CD4-positive, alpha-beta memory T cell (primary cell): ENCODE measurements at regions of chr12 and their contacts with region 1.

Region 1: GRCh38 chr12:109093022-109093918 is at the start of gene ALKBH2:
- DNase-seq: peak; percentile 93 to 98 (median 95)
- H3K4me3 ChIP-seq: peak within 1 kb of the TSS; percentile 62 to 75
- H3K4me3 Mint-ChIP-seq: peak within 1 kb of the TSS; percentile 84 to 91 (median 86)
- H3K27ac ChIP-seq: peak within 1 kb of the TSS; percentile 60
- H3K27ac Mint-ChIP-seq: peak within 1 kb of the TSS; percentile 86 to 97 (median 95)
- H3K4me1 ChIP-seq: peaks cover 27% of the 10 kb centered on the region
- H3K4me1 Mint-ChIP-seq: peaks cover 21 to 56% (median 34%) of the 10 kb centered on the region in 4 donors
- H3K27me3 ChIP-seq: no peaks in the 10 kb centered on the region
- H3K27me3 Mint-ChIP-seq: no peaks in the 10 kb centered on the region
- total RNA-seq, gene ALKBH2: 12.9 to 14.4 TPM

Region 2: GRCh38 chr12:107760809-107761501 is 1332.3 kb before region 1 on chr12 and contains the start of gene PRDM4:
- CTCF ChIA-PET with region 1: no interaction called
- POLR2A ChIA-PET with region 1: no interaction called
- intact Hi-C with region 1: loop called (anchors 2 kb)
- DNase-seq: peak; percentile 87 to 94 (median 93)
- H3K4me3 ChIP-seq: peak within 1 kb of the TSS; percentile 77 to 82
- H3K4me3 Mint-ChIP-seq: peak within 1 kb of the TSS; percentile 89 to 95 (median 92)
- H3K27ac ChIP-seq: peak within 1 kb of the TSS; percentile 64
- H3K27ac Mint-ChIP-seq: peak within 1 kb of the TSS; percentile 90 to 98 (median 94)
- H3K4me1 ChIP-seq: peaks cover 41% of the 10 kb centered on the region
- H3K4me1 Mint-ChIP-seq: peaks cover 17 to 45% (median 26%) of the 10 kb centered on the region in 4 donors
- H3K27me3 ChIP-seq: no peaks in the 10 kb centered on the region
- H3K27me3 Mint-ChIP-seq: no peaks in the 10 kb centered on the region
- total RNA-seq, gene PRDM4: 35.8 to 38.3 TPM

Region 3: GRCh38 chr12:108884116-108885012 is 208.9 kb before region 1 on chr12:
- CTCF ChIA-PET with region 1: interaction called, 57 read pairs
- POLR2A ChIA-PET with region 1: no interaction called
- intact Hi-C with region 1: no loop called
- DNase-seq: peak; percentile 51 to 58 (median 54)
- H3K4me3 ChIP-seq: no peak overlapping the region
- H3K4me3 Mint-ChIP-seq: no peak overlapping the region
- H3K27ac ChIP-seq: no peak overlapping the region
- H3K27ac Mint-ChIP-seq: peak overlapping the region in 1 of 7 donors; percentile 60
- H3K4me1 ChIP-seq: no peaks in the 10 kb centered on the region
- H3K4me1 Mint-ChIP-seq: peaks cover 0 to 2% (median under 1%) of the 10 kb centered on the region in 4 donors
- H3K27me3 ChIP-seq: no peaks in the 10 kb centered on the region
- H3K27me3 Mint-ChIP-seq: no peaks in the 10 kb centered on the region

Region 4: DNA sequence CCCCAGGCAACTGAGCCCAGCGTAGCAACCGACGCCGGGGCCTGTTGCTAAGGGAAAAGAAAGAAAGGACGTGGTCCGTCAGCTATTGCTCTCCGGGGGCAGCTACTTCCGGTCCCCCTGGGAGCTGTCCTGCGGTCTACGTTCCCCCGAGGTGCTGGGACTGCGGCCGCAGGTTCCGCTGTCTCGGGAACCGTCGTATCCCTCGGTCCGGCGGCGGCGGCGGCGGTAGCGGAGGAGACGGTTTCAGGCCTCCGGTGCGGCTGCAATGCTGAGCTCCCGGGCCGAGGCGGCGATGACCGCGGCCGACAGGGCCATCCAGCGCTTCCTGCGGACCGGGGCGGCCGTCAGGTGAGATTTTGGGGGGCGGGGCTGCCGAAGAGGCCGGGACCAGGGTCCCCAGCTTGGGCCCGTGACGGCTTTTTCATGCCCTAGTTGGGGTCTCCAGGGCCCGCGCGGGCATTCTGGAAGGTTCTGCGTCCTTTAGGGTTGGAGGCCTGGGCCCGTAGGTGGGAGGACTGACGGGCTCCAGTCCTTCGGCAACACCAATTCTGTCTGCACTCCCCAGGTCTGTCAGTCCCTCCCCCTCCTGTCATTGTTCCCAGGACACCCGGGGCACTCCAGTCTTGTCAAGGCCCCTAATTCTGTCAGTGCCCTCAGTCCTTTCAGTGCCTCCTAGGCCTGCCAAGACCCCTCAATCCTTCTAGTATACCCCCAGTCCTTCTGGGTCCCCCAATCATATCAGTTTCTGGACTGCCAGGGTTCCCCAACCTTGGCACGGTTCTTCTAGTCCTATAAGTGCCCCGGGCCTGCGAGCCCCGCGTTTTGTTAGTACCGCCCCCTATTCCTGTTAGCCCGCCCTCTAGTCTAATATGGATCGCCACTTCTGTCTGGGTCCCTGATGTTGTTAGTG is 40.6 kb before region 1 on chr12 and contains the start of gene USP30:
- CTCF ChIA-PET with region 1: interaction called, 8 read pairs
- POLR2A ChIA-PET with region 1: interaction called, 11 read pairs
- intact Hi-C with region 1: loop called (anchors 1 kb)
- DNase-seq: peak; percentile 75 to 83 (median 79)
- H3K4me3 ChIP-seq: peak within 1 kb of the TSS; percentile 87 to 96
- H3K4me3 Mint-ChIP-seq: peak within 1 kb of the TSS; percentile 93 to 100 (median 96)
- H3K27ac ChIP-seq: peak within 1 kb of the TSS; percentile 85
- H3K27ac Mint-ChIP-seq: peak within 1 kb of the TSS; percentile 87 to 100 (median 98)
- H3K4me1 ChIP-seq: peaks cover 18% of the 10 kb centered on the region
- H3K4me1 Mint-ChIP-seq: peaks cover 10 to 27% (median 17%) of the 10 kb centered on the region in 4 donors
- H3K27me3 ChIP-seq: no peaks in the 10 kb centered on the region
- H3K27me3 Mint-ChIP-seq: no peaks in the 10 kb centered on the region
- total RNA-seq, gene USP30: 8.1 to 14.2 TPM

Region 5: GRCh38 chr12:109154451-109155438 is 61.5 kb after region 1 on chr12:
- CTCF ChIA-PET with region 1: no interaction called
- POLR2A ChIA-PET with region 1: interaction called, 6 read pairs
- intact Hi-C with region 1: loop called (anchors 1 kb)
- DNase-seq: peak; percentile 74 to 83 (median 77)
- H3K4me3 ChIP-seq: peak overlapping the region; percentile 68 to 75
- H3K4me3 Mint-ChIP-seq: peak overlapping the region; percentile 85 to 96 (median 94)
- H3K27ac ChIP-seq: peak overlapping the region; percentile 42
- H3K27ac Mint-ChIP-seq: peak overlapping the region; percentile 70 to 96 (median 87)
- H3K4me1 ChIP-seq: peaks cover 15% of the 10 kb centered on the region
- H3K4me1 Mint-ChIP-seq: peaks cover 10 to 24% (median 16%) of the 10 kb centered on the region in 4 donors
- H3K27me3 ChIP-seq: no peaks in the 10 kb centered on the region
- H3K27me3 Mint-ChIP-seq: no peaks in the 10 kb centered on the region